ENCODE measurements at regions of chr14 and their contacts with region 1.

Region 1: GRCh38 chr14:64986578-64987571 is at the start of gene FNTB:
- DNase-seq: peak; percentile 96
- ATAC-seq: peak; percentile 96
- H3K4me3 Mint-ChIP-seq: peak within 1 kb of the TSS; percentile 82
- H3K27ac Mint-ChIP-seq: peak within 1 kb of the TSS; percentile 99
- H3K4me1 Mint-ChIP-seq: peaks cover 46% of the 10 kb centered on the region
- H3K27me3 Mint-ChIP-seq: peaks cover 5% of the 10 kb centered on the region
- total RNA-seq, gene FNTB: 18.2 to 24.9 TPM

Region 2: DNA sequence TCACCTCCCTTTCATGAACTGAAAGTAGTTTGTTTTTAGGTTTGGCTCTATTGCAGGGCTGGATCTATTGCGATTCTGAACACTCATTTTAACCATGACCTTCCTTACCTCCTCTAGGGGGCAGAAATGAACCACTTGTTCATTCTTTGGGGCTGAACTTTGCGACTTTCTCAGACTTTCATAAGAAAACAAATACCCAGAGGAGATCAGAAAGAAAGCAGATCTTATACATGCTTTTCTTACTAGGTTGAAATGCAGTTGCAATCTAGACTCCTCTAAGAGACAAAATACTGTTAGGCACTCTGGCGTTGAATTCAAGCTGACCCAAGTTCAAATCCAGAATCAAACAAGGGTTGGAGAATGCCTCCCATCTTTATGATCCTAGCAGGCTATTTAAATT is 315.3 kb before region 1 on chr14:
- CTCF ChIA-PET with region 1: interaction called, 3 read pairs
- POLR2A ChIA-PET with region 1: no interaction called
- intact Hi-C with region 1: loop called (anchors 1 to 5 kb)
- DNase-seq: no peak
- ATAC-seq: peak; percentile 74
- H3K4me3 Mint-ChIP-seq: no peak overlapping the region
- H3K27ac Mint-ChIP-seq: no peak overlapping the region
- H3K4me1 Mint-ChIP-seq: peaks cover 17% of the 10 kb centered on the region
- H3K27me3 Mint-ChIP-seq: no peaks in the 10 kb centered on the region

Region 3: GRCh38 chr14:64823305-64823861 is 163.5 kb before region 1 on chr14:
- CTCF ChIA-PET with region 1: interaction called, 9 read pairs
- POLR2A ChIA-PET with region 1: no interaction called
- intact Hi-C with region 1: loop called (anchors 1 kb)
- DNase-seq: peak; percentile 84
- ATAC-seq: peak; percentile 98
- H3K4me3 Mint-ChIP-seq: no peak overlapping the region
- H3K27ac Mint-ChIP-seq: no peak overlapping the region
- H3K4me1 Mint-ChIP-seq: no peaks in the 10 kb centered on the region
- H3K27me3 Mint-ChIP-seq: peaks cover 8% of the 10 kb centered on the region

Region 4: GRCh38 chr14:64914237-64914971 is 72.5 kb before region 1 on chr14 and contains the start of gene CHURC1:
- CTCF ChIA-PET with region 1: interaction called, 6 read pairs
- POLR2A ChIA-PET with region 1: interaction called, 5 read pairs
- intact Hi-C with region 1: loop called (anchors 1 kb)
- DNase-seq: peak; percentile 98
- ATAC-seq: peak; percentile 96
- H3K4me3 Mint-ChIP-seq: peak within 1 kb of the TSS; percentile 89
- H3K27ac Mint-ChIP-seq: peak within 1 kb of the TSS; percentile 95
- H3K4me1 Mint-ChIP-seq: peaks cover 45% of the 10 kb centered on the region
- H3K27me3 Mint-ChIP-seq: no peaks in the 10 kb centered on the region
- total RNA-seq, gene CHURC1: 37.6 to 66.1 TPM

Region 5: DNA sequence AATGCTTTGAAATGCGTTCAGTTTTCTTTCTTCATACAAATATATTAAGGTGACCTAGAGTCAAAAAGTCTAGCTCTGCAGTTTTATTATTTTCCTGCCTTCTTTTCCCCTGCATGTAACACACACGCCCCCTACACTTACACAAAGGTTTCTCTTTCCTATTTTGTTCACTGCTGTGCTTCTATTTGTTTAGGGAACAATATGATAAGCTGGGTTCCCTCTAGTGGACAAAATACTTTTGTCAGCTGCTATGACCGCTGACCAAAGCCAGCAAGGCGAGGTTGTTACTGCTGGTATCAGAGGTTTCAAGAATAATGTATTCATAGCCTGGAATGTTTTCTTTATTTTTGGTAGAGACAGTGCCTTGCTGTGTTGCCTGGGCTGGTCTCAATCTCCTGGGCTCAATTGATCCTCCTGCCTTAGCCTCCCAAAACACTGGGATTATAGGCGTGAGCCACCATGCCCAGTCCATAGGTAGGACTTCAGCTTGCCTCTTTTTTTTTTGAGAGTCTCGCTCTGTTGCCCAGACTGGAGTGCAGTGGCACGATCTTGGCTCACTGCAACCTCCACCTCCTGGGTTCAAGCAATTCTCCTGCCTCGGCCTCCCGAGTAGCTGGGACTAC is 33.2 kb after region 1 on chr14:
- CTCF ChIA-PET with region 1: interaction called, 20 read pairs
- POLR2A ChIA-PET with region 1: interaction called, 3 read pairs
- intact Hi-C with region 1: loop called in 1 of 2 experiments (anchors 2 kb)
- DNase-seq: no peak
- ATAC-seq: peak; percentile 53
- H3K4me3 Mint-ChIP-seq: no peak overlapping the region
- H3K27ac Mint-ChIP-seq: no peak overlapping the region
- H3K4me1 Mint-ChIP-seq: no peaks in the 10 kb centered on the region
- H3K27me3 Mint-ChIP-seq: no peaks in the 10 kb centered on the region

Region 6: DNA sequence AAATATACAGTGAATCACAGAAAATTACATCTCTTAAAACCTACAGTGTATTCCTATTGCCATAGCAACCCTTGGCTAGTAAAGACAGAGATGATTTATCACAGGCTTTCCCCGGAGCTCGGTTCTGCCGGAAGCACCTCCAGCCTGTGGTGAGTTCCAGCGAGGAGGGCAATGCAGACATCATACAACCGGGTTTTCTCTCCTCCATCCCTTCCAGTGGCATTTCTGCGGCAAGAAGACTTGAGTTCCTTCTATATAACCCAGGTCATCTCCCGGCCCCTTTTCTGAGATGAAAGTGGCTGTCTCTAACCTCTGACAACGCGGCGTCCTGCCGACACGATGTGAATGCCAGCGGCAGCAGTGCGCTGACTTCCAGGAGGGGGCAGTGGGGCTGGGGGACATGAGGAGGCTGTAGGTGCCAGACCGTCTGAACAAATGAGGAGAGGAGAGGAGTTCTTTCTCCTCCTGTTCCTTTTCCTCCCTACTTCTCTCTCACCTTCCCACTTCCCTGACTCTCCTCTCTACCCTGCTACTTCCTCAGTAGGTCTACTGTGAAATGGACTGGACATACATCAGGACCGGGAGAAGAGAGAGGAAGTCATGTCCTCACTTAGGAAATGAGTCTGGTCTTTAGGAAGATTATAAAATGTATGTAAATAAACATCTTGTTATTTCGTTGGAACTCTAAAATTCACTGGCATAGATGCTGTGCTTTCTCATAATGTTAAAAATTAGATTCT is 184.1 kb after region 1 on chr14:
- CTCF ChIA-PET with region 1: no interaction called
- POLR2A ChIA-PET with region 1: no interaction called
- intact Hi-C with region 1: no loop called
- DNase-seq: peak; percentile 73
- ATAC-seq: peak; percentile 84
- H3K4me3 Mint-ChIP-seq: peak overlapping the region; percentile 71
- H3K27ac Mint-ChIP-seq: peak overlapping the region; percentile 76
- H3K4me1 Mint-ChIP-seq: peaks cover 19% of the 10 kb centered on the region
- H3K27me3 Mint-ChIP-seq: peaks cover 9% of the 10 kb centered on the region

Region 7: GRCh38 chr14:65287264-65288131 is 300.6 kb after region 1 on chr14:
- CTCF ChIA-PET with region 1: no interaction called
- POLR2A ChIA-PET with region 1: no interaction called
- intact Hi-C with region 1: loop called in 1 of 2 experiments (anchors 5 kb)
- DNase-seq: peak; percentile 78
- ATAC-seq: peak; percentile 66
- H3K4me3 Mint-ChIP-seq: peak overlapping the region; percentile 65
- H3K27ac Mint-ChIP-seq: peak overlapping the region; percentile 98
- H3K4me1 Mint-ChIP-seq: peaks cover 70% of the 10 kb centered on the region
- H3K27me3 Mint-ChIP-seq: no peaks in the 10 kb centered on the region

Measured in activated CD4-positive, alpha-beta T cell treated with anti-CD3 and anti-CD28 coated beads for 36 hours (primary cell).